ENCODE measurements at regions of chr16 and their contacts with region 1.

Region 1: GRCh38 chr16:88941913-88942909 is 34.8 kb downstream of the CBFA2T3 start:
- DNase-seq: peak; percentile 63 to 80
- H3K4me3 ChIP-seq: peak overlapping the region; percentile 55 to 75 (median 62)
- H3K27ac ChIP-seq: peak overlapping the region in 2 of 5 donors; percentile 31 to 70
- H3K4me1 ChIP-seq: peaks cover 20 to 51% (median 46%) of the 10 kb centered on the region in 4 donors
- H3K27me3 ChIP-seq: peaks cover 0 to 84% (median 33%) of the 10 kb centered on the region in 3 donors
- CTCF ChIP-seq: peak in 5 of 7 experiments; percentile 4 to 92 (median 39)
- EP300 ChIP-seq: no peak
- POLR2A ChIP-seq: no peak

Region 2: DNA sequence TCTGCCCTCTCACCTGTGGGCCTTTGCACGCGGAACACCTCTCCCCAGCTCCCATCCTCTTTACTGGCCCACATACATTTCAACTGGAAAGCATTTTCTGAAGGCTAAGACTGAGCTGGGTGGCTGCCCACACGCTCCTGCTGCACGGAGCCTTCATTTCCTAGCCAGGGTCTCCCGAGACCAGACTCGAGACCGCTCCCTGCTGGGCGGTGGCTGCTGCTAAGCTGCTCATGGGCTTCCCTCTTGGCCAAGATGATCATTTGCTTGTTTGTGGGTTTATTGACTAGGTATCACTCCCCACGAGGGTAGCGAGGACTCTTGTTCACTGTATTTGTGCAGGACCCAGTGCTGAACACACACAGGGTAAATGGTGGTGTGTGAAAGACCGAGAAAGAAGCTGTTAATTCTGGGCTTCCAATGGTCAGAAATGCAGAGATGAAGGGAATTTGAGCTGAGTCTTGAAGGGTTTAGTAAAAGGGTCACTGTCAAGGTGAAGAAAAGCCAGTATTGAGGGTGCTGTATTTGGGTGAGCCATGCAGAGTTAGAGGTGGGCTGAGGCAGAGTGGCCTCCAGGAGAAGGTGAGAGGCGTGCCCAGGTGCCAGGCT is 84.4 kb before region 1 on chr16:
- intact Hi-C with region 1: no loop called
- DNase-seq: peak; percentile 76 to 92
- H3K4me3 ChIP-seq: peak overlapping the region; percentile 95 to 99 (median 97)
- H3K27ac ChIP-seq: peak overlapping the region; percentile 89 to 94 (median 92)
- H3K4me1 ChIP-seq: peaks cover 24 to 48% (median 44%) of the 10 kb centered on the region in 4 donors
- H3K27me3 ChIP-seq: no peaks in the 10 kb centered on the region
- CTCF ChIP-seq: peak in 5 of 7 experiments; percentile 14 to 58 (median 48)
- EP300 ChIP-seq: no peak
- POLR2A ChIP-seq: no peak

Region 3: GRCh38 chr16:89171463-89172170 is 229.4 kb after region 1 on chr16 and contains the start of gene CDH15:
- intact Hi-C with region 1: loop called (anchors 5 kb)
- DNase-seq: peak; percentile 97 to 98
- H3K4me3 ChIP-seq: peak within 1 kb of the TSS; percentile 27 to 48 (median 31)
- H3K27ac ChIP-seq: no peak within 1 kb of the TSS
- H3K4me1 ChIP-seq: peaks cover 23 to 32% (median 29%) of the 10 kb centered on the region in 4 donors
- H3K27me3 ChIP-seq: peaks cover 0 to 100% (median 45%) of the 10 kb centered on the region in 3 donors
- CTCF ChIP-seq: no peak
- EP300 ChIP-seq: no peak
- POLR2A ChIP-seq: no peak
- total RNA-seq, gene CDH15: not detected